GM13977 (cell line): ENCODE measurements at regions of chr3 and their contacts with region 1.

Region 1: GRCh38 chr3:108914774-108915641 is 38.7 kb downstream of the GUCA1C start:
- DNase-seq: peak; percentile 54
- CTCF ChIP-seq: peak; percentile 89

Region 2: GRCh38 chr3:108524537-108524936 is 390.5 kb before region 1 on chr3:
- in situ Hi-C with region 1: loop called (anchors 25 kb)
- DNase-seq: no peak
- CTCF ChIP-seq: no peak

Region 3: DNA sequence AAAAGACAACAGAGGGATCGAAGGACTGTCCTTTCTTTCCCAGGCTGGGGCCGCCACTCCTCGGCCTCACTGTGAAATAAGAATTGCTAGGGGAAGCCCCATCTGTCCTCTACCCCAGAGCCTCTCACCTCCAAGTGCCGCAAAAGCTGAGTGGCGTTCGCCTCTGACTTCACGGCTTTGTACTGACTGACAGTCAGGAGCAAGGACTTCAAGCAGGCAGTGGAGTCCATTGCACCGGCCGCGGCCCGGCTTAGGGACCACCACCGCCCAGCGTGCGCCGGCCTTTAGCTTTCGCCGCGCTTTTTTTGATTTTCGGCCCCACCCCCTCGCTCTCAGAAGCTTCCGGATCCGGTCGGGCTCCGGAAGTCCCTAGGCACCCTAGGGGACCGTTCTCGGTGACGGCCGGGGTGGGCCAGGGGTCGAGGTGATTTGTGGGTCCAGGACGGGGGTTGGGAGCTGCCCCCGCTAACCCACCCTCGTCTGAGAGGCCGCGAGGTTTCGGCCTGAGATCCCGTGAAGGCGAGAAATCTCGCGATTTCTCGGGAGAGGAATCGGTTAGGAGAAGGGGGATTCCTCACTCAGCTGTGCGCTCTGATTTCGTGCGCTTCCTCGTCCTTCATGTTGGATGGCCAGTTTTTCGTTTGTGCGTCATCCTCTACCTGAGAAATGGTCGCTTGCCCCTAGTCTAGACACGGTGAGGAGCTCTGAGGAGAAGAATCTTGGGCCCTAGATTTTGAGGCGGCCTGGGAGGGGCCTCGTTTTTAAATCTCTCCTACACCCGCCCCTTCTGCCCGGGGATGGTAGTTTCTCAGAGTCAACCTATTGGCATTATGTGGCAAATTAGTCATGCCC is 325.6 kb before region 1 on chr3 and contains the starts of genes CIP2A and DZIP3:
- in situ Hi-C with region 1: no loop called
- DNase-seq: peak; percentile 81
- CTCF ChIP-seq: no peak

Region 4: DNA sequence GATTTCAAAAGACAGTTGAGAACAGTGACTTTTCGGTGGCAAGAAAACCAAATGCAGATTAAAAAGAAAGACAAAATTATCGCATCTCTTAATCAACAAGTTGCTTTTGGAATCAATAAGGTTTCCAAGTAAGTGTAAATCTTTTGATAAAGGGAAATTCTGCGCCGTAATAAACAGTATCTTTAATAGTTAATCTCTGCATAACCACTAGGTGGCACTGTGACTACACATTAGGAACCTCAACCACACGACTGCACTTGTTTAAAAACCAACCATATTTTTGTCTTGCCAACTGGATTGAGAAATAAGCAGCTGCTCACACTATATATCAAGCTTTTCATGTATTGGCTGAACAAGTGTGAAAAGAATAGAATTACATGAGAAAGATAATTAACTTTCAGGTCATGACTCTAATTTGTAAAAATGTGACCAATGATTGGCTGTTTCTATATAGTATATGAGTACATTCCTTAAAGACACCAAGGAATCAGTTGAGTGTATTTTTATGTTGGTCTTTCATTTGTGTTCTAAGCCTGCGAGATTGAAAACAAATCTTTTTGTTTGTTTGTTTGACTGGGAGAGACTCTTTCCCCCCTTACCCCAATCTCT is 252.8 kb before region 1 on chr3:
- in situ Hi-C with region 1: loop called (anchors 10 kb)
- DNase-seq: peak; percentile 61
- CTCF ChIP-seq: peak; percentile 66

Region 5: DNA sequence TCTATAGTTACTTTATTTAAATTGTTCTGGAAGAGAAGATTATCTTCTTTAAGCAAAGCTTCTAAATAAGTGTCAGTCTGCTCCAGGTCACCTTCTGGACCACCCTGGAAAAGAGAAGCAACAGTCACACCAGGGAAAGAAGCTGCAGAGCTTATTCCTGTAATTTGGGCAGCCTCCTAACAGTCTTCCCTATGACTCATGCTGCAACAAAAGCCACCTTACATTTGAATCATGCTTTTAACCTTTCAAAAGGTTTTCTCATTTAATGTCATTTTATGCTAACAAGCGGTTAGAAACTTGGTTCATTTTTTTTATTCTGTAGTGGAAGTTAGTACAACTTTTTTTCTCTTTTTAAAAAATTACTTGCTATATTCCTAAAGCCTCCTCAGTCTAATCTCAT is 44.0 kb after region 1 on chr3:
- in situ Hi-C with region 1: no loop called
- DNase-seq: no peak
- CTCF ChIP-seq: no peak